Right ventricle myocardium superior (tissue), 1 donor: ENCODE measurements at regions of chr1 and their contacts with region 1.

Region 1: DNA sequence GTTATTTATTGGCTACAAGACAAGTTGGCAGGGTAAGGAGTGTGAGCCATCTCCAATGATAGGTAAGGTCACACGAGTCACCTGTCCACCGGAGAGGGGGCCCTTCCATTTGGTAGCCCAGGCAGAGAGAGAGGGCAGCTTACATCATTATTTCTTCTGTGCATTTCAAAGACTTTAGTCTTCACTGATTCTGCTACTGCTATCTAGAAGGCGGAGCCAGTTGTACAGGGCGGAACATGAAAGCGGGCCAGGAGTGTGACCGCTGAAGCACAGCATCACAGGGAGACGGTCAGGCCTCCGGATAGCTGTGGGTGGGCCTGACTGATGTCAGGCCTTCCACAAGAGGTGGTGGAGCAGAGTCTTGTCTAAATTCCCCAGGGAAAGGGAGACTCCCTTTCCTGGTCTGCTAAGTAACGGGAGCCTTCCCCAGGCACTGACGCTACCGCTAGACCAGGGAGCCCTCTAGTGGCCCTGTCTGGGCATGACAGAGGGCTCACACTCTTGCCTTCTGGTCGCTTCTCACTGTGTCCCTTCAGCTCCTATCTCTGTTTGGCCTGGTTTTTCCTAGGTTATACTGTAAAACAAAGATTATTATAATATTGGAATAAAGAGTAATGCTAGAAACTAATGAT is 36.7 kb downstream of the ZNF695 start:
- DNase-seq: peak; percentile 71
- ATAC-seq: no peak

Region 2: DNA sequence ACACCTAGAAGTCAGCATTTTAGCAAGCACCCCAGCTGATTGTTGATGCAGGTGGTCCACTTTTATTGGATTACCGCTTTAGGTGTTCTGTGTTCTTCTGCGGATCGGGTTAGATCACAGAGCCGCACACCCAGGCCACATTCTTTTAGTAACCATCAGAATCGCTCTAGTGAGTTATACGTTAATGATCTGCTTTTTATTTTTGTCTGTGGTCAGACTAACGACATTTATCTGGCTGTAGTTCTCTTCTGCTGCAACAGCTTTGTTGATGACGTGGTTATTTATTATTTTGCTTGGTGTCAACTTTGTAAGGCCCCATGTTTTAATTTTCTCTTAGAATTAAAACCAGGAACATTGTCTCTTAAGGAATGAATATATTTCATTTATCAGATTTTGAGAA is 228.8 kb before region 1 on chr1:
- intact Hi-C with region 1: no loop called
- DNase-seq: no peak
- ATAC-seq: no peak

Region 3: DNA sequence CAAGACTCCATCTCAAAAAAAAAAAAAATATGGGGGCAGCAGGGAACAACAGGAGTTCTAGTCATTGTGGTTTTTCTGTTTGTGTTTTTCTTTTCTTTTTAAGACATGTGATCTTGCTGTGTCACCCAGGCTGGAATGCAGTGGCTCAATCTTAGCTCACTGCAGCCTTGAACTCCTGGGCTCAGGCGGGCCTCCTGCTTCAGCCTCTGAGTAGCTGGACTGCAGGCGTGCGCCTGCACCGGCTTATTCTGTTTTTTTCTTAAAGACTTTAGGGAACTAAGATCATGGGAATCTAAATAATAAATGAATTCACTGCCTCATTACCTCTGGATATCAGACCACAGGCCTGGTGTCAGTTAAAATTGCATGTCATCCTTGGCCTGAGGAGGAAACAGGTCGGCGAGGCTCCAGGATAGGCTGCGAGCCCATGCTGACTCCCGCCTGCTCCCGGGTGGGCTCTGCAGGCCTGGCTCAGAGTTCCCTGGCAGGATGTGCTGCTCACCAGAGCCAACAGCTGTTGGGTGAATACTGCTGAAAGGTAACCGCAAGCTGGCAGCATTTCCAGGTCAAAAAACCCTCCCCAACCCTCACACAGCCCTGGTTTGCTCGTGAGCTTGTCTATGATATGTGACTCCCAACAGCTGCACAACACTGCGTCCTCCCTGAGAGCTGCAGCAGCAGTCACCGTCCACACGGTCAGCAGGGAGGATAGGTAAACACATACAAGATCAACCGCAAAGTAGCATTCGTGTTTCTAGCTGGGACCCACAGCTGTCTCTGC is 188.9 kb before region 1 on chr1:
- intact Hi-C with region 1: no loop called
- DNase-seq: peak; percentile 74
- ATAC-seq: peak; percentile 88

Region 4: GRCh38 chr1:246860401-246860800 is 110.8 kb before region 1 on chr1:
- intact Hi-C with region 1: no loop called
- DNase-seq: no peak
- ATAC-seq: no peak

Region 5: GRCh38 chr1:246907472-246907871 is 63.7 kb before region 1 on chr1:
- intact Hi-C with region 1: loop called (anchors 5 kb)
- DNase-seq: no peak
- ATAC-seq: peak; percentile 60

Region 6: DNA sequence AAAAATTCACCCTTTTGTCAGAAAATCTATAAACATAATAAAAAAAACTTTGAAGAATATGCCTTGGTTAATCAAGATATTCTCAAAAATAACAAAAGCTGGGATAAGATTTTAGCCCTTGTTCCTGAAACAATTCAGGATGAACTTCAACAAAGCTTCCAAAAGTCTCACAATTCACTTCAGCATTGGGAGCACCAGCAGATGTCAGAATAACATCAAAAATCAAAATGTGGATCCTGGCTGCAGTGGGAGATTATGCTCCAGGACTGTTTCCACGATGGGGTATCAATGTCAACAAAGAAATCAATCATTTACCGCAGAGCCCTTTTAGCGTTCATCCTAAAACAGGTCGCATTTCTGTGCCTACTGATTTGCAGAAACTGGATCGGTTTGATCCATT is 72.2 kb after region 1 on chr1:
- intact Hi-C with region 1: no loop called
- DNase-seq: no peak
- ATAC-seq: no peak